Posterior cingulate gyrus (tissue), 11 donors: ENCODE measurements at regions of chr5 and their contacts with region 1.

Region 1: GRCh38 chr5:75681125-75681830 is 36.0 kb downstream of the POC5 start:
- DNase-seq: no peak

Region 2: DNA sequence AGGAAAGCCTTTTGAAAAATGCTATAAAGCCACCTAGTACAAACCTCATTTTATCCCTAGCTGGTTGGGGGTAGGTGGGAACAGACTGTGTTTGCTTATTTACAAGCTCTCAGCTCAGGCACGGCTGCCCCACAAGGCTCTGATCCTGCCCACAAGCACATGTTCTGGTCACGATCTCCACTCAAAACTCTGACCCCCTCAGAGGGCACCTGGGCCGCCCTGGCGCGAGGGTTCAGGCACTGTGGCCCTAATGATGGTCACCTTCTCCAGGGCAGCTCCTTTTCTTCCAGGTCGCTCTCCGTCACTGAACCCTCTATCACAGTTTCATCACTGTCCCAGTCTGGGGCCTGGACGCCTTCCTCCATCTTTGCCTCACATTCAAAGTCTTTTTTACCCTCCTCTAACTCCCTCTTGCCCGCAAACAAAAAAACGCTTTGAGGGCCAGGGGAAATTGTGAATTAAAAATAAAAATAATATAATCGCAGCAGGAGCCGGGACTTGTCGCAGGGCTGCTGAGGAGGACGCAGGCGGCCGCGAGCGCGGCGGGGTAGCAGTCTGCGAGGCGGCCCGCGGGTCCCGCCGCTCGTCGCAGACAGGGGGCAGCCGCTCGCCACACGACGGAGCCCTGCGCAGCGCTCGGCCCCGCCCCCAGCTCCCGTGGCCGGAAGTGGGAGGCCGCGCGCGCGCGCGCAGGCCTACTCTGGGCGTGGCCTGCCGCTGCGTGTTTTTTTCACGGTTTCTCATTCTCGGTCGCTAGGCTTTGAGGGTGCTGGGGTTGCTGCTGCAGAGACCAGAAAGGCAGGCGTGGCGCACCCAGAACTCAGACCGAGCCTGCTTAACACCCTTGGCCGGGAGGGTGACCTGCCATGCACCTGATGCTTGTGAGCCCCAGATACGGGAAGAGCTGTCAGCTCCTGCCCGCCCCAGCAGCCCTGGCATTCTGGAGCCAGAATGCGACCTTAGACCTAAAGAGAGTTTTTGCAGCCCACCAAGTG is 444.7 kb before region 1 on chr5 and contains the start of gene ANKRD31:
- intact Hi-C with region 1: loop called (anchors 2 kb)
- DNase-seq: peak; percentile 68 to 98 (median 80)